ENCODE measurements at regions of chr10 and their contacts with region 1.

Region 1: DNA sequence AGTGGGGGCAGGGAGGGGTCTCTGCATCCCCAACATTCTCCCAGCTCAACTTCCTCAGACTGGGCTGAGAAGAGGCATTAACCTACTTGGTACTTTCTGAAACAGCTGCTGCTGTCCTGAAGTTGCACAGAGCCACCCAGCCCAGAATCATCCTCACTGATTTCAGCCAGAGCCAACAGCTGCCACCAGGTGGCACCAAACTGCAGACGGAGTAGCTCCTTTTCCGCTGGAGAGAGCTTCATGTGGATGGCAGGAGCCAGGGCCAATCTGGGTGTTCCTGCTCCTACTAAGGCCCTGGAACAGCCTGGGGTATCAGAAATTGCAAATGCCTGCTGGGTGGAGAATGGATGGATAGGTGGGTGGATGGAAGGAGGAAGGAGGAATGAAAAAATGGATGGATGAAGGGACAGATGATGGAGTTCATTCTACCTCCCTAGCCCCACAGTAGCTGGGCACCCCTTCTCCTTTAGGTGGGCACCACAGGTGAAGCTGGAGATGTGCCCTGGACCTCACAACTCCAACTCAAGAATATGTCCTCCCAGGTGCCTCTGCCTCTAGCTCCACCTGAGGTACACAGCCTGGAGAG is 11.8 kb upstream of the DRGX start:
- DNase-seq: peak; percentile 89
- ATAC-seq: peak; percentile 78

Region 2: DNA sequence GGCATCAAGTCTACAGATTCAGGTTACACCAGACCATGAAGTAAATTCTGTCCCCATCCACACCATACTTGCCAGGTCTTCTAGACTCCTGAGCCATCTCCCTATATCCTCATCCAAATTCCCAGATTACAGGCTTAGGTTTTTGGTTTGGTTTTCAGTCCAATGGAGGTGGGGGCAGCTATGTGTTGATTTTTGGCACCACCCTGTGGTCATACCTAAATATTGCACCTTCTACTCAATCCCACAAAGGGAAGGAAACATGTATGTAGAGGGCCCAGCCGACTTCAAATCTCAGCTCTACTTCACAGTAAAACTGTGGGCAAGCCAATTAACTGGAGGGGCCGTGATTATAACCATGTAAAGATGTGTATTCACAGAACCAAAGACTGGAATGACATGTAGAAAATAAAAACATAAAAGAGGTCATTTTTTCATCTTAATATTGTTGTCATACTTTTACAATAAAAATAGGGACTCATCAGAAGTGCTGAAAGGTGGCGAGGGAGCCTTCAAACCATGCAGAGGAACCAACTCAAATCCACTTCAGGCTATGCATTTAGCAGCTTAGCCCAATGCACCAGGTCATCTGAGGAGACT is 111.4 kb after region 1 on chr10:
- intact Hi-C with region 1: loop called (anchors 10 kb)
- DNase-seq: no peak
- ATAC-seq: peak; percentile 75

Region 3: DNA sequence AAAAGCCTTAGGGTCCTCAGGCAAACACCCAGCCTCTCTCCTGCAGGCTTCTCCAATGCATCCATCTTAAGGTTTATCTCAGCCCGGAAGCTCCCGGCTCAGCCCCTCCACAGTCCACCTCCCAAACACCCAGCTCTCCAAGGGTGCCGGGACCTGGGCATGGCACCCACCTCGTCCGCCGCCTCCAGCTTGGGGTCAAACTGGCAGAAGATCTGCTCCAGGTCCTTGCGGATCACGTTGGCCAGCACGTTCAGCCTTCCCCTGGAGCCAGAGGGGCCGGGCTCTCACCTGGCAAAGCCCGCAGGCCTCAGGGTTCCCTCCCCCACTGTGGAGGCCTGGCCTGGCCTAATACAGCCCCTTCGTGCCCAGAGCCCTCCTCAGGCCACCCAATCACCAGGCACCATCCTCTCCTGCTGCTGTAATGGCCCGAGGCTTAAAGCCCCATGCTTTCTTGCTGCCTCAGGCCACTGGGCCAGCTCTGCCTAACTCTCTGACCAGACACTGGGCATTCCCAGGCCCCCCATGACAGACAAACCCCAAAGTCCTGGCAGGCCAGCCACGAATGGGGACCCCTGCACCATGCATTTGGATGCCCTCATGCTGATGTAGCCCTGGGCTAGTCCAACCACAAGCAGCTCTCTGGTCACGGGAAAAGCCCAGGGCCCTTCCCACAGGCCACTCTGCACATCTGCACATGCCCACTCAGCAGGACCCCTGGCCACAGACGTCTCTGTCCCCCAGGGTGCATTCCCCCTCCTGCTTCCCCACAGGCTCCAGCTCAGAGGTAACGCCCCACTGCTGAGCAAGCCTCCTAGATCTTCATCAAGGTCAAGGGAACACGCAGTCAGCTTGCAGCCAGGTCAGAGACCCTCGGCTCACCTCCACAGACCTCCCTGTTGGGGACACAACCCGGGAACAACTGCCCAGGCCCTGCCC is 342.2 kb after region 1 on chr10:
- intact Hi-C with region 1: no loop called
- DNase-seq: no peak
- ATAC-seq: no peak

Region 4: DNA sequence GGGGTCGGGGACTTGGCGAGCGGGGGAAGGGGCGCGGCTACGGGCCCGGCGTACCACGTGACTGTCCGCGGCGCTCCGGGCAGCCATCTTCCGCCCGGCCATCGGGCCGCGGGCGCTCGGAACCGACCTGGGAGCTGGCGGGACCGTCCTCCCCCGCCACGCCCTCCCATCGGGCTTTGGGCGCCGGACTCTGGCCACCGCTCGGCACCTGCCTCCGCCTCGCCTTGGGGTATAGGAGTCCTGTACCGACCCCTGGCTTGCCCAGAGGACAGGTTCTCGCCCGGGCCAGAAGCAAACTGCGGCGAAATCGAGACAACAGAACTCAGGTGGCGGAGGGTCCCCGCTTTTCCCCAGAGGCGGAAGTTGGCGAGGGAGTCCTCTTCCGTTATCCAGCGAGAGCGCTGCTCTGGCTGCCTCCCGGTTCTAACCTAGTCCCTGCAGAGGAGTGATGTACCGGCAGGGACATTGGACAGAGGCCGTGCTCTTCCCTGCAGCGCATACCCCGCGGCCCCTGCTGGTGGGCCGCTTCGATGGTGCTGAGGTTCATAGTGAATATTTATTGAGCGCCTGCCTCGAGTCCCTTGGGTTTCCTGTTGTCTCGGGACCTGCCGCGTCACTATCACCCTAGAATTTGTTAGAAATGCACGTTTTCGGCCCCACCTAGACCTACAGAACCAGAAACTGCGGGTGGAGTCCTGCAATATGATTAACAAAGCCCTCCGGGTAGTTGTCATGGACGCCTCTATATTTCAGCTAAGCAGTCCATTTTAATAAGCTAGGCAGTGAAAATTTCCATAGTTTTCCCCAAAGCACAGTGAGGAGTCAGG is 1217.4 kb after region 1 on chr10:
- intact Hi-C with region 1: no loop called
- DNase-seq: peak; percentile 92
- ATAC-seq: peak; percentile 76